Left cardiac atrium (tissue), 4 donors: ENCODE measurements at regions of chr9 and their contacts with region 1.

Region 1: GRCh38 chr9:79577969-79578723 is 6.4 kb downstream of the TLE4 start:
- DNase-seq: no peak
- ATAC-seq: peak in 1 of 2 donors; percentile 36

Region 2: DNA sequence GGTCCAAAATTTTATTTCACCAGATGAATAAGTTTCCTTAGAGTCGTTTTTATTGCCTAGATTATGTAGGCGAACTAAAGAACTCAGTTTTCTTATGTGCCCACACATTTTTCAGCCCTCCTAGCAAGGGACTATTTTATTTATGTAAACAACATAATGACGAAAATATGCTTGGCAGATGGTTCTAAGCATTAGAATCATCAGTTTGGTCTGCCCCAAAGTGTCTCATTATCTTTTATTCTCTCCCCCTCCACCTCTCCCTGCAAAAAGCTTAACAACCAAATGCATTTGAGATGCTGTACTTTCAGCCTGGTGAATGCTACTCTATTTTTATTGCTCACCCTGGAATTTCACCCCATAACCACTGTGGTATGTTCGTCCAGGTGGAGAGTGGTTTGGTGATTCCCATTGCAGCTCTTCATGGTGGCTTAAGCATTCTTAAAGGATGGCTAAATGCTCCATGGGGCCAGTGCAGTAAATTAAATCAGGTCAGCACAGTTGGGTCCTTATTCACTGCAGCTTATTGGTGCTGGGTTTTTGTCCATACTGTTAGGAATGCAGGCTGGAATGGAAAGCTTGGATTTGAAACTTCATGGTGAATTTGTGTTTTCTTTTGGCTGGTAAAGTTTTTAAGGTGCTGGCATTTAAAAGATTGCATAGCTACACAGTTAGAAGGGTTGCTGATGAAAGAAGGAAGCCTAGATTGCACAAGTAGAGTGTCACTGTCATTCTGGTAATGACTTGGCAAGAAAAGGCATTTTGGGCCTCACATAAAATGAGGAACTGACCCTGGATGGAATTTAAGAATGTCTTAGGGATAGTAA is 32.9 kb after region 1 on chr9:
- intact Hi-C with region 1: loop called in 1 of 2 experiments (anchors 5 kb)
- DNase-seq: no peak
- ATAC-seq: peak in 1 of 2 donors; percentile 52

Region 3: DNA sequence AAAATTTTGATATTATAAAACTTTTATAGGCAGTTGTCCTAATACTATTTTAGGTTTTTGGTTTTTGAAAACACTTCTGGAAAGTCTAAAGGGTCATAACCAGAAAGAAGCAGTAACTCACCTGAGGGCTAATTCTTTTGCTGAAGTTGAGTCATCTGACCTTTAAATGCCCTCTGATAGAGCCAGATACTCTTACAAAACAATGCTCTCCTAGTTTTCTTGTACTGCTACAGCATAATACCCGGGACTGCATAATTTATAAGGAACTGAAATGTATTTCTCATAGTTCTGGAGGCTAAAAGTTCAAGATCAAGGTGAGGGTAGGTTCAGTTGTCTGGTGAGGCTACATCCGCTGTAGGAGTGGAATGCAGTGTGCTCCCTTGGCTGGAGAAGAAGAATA is 663.9 kb after region 1 on chr9:
- intact Hi-C with region 1: no loop called
- DNase-seq: no peak
- ATAC-seq: no peak